ENCODE measurements at regions of chr3 and their contacts with region 1.

Region 1: DNA sequence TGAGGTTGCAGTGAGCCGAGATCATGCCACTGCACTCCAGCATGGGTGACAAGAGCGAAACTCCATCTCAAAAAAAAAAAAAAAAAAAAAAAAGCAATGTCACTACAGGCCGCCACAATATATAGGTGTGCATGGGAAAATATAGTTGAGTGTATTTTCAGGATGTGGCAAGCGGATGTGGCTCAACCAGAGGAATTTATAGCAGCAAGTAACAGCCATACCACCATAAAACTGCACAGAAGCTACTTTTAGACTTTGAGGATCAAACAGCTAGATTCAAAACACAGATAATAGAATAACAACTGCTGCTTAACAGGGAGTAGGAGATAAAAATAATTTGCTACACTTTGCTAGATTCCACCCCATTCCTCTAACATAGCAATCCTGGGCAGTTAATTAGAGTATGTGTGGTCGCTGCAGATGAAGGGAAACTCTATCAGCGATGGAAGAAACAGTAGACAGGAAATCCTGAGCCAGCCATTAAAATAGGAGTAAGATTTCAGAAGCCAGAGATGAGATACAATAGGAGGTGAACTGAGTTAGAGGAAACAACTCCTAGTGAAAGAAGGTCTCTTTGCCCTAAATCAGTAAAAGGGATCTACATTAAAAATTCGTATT is 318.7 kb upstream of the STT3B start:
- DNase-seq: peak; percentile 53
- H3K4me3 Mint-ChIP-seq: peak overlapping the region; percentile 43
- H3K27ac Mint-ChIP-seq: peak overlapping the region; percentile 81
- H3K4me1 Mint-ChIP-seq: peaks cover 94% of the 10 kb centered on the region
- H3K27me3 Mint-ChIP-seq: no peaks in the 10 kb centered on the region

Region 2: GRCh38 chr3:31227131-31227562 is 13.2 kb after region 1 on chr3:
- intact Hi-C with region 1: loop called (anchors 1 kb)
- DNase-seq: no peak
- H3K4me3 Mint-ChIP-seq: peak overlapping the region; percentile 17
- H3K27ac Mint-ChIP-seq: peak overlapping the region; percentile 70
- H3K4me1 Mint-ChIP-seq: peaks cover 83% of the 10 kb centered on the region
- H3K27me3 Mint-ChIP-seq: no peaks in the 10 kb centered on the region

Region 3: GRCh38 chr3:31247850-31248562 is 34.0 kb after region 1 on chr3:
- intact Hi-C with region 1: loop called (anchors 1 kb)
- DNase-seq: no peak
- H3K4me3 Mint-ChIP-seq: no peak overlapping the region
- H3K27ac Mint-ChIP-seq: peak overlapping the region; percentile 75
- H3K4me1 Mint-ChIP-seq: peaks cover 51% of the 10 kb centered on the region
- H3K27me3 Mint-ChIP-seq: no peaks in the 10 kb centered on the region

Region 4: DNA sequence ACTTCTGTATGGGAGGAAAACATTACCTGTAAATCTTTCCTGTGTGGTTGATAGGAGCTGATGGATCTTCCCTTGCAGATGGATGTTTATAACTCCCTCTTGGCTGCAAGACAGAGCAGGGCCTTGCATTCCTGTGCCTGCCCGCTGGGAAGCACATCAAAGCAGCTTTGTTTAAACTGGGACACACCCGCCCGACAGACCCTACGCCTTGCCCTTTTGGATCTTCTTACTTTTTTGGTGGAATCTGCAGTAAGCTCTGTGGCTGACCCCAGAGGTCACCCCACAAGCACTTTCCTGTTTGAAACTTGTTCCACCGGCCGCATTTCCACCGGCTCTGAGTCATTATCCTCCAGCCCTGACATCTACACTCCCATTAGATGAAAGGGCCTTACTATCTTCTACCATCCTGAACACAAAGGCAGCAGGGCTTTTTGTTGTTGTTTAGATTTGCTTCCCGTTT is 74.7 kb after region 1 on chr3:
- intact Hi-C with region 1: loop called (anchors 2 kb)
- DNase-seq: peak; percentile 44
- H3K4me3 Mint-ChIP-seq: peak overlapping the region; percentile 46
- H3K27ac Mint-ChIP-seq: peak overlapping the region; percentile 87
- H3K4me1 Mint-ChIP-seq: peaks cover 49% of the 10 kb centered on the region
- H3K27me3 Mint-ChIP-seq: no peaks in the 10 kb centered on the region